ENCODE measurements at regions of chr3 and their contacts with region 1.

Region 1: DNA sequence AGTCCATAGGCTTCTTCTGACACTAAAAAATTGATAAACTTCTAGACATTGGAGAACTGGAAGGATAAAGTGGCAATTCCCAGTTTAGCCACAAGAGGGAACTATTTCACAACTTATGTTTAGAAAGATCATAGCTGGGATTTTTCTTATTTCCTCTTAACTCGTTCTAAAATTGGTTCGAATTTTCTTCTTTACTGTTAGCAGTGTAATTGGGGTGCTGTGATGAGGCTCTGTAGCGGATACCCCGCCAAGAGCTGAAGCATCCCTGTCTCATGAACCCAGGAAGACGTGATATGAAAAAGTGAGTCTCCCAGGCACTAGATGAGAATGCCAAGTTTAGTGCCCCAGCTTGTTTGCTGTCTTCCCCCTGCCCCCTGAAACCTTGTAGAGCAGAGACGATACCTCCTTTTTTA is 85.1 kb downstream of the PDCD6IP start:
- DNase-seq: no peak
- H3K4me3 Mint-ChIP-seq: no peak overlapping the region
- H3K27ac Mint-ChIP-seq: no peak overlapping the region
- H3K4me1 Mint-ChIP-seq: peaks cover 2% of the 10 kb centered on the region
- H3K27me3 Mint-ChIP-seq: peaks cover 4% of the 10 kb centered on the region

Region 2: DNA sequence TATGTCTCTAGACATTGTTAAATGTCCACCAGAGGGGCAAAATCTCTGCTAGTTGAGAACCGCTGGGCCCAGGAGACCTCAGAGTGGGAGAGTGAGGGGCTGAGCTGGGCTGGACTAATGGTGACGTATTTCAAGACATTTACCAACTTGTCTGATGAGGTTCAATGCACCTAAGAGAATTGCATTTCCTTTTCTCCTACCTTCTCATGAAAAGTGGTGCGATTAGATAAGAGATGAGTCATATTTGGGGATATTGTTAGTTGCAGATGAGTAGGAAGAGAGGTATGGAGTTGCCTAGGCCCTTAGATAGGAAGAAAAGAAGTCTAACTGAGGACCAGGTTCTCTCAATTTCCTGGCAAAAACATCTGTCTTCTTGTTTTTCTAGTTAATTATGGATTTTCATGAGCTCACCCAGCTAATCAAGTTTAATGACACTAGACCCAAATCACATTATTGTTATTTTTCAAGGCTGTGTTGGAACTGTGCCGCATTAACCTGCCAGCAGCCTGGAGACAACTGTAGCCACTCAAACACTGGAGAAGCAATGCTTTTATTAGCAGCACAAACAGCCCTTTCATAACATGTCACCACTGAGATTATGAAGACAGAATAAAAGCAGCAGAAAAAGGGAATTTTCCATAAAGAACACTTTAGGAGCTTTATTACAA is 59.1 kb after region 1 on chr3:
- CTCF ChIA-PET with region 1: no interaction called
- DNase-seq: no peak
- H3K4me3 Mint-ChIP-seq: no peak overlapping the region
- H3K27ac Mint-ChIP-seq: no peak overlapping the region
- H3K4me1 Mint-ChIP-seq: no peaks in the 10 kb centered on the region
- H3K27me3 Mint-ChIP-seq: peaks cover 4% of the 10 kb centered on the region

Region 3: GRCh38 chr3:34015204-34016142 is 131.9 kb after region 1 on chr3:
- CTCF ChIA-PET with region 1: interaction called, 10 read pairs
- DNase-seq: no peak
- H3K4me3 Mint-ChIP-seq: no peak overlapping the region
- H3K27ac Mint-ChIP-seq: no peak overlapping the region
- H3K4me1 Mint-ChIP-seq: peaks cover 36% of the 10 kb centered on the region
- H3K27me3 Mint-ChIP-seq: no peaks in the 10 kb centered on the region

Region 4: DNA sequence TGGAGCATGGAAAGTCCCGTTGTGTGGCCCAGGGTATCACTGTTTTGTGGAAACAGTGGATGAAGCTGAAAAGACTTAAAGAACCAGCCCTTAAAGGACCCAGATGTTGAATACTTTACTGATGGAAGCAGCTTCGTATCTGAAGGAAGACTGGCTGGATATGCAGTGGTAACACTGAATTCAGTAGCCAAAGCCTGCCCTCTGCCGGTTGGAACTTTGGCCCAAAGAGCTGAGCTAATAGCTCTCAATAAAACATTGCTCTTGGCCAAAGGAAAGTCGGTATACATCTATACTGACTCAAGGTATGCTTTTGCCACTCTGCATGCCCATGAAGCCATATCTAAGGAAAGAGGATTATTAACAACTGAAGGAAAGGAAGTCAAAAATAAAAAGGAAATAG is 800.3 kb after region 1 on chr3:
- CTCF ChIA-PET with region 1: interaction called, 32 read pairs
- DNase-seq: peak; percentile 44
- H3K4me3 Mint-ChIP-seq: no peak overlapping the region
- H3K27ac Mint-ChIP-seq: no peak overlapping the region
- H3K4me1 Mint-ChIP-seq: no peaks in the 10 kb centered on the region
- H3K27me3 Mint-ChIP-seq: no peaks in the 10 kb centered on the region

Measured in activated naive CD4-positive, alpha-beta T cell treated with anti-CD3 and anti-CD28 coated beads, Interleukin-2, amount 10 ng/mL, durations not matched to agents 7 days and 5 days (primary cell).